ENCODE measurements at regions of chr1 and their contacts with region 1.

Region 1: DNA sequence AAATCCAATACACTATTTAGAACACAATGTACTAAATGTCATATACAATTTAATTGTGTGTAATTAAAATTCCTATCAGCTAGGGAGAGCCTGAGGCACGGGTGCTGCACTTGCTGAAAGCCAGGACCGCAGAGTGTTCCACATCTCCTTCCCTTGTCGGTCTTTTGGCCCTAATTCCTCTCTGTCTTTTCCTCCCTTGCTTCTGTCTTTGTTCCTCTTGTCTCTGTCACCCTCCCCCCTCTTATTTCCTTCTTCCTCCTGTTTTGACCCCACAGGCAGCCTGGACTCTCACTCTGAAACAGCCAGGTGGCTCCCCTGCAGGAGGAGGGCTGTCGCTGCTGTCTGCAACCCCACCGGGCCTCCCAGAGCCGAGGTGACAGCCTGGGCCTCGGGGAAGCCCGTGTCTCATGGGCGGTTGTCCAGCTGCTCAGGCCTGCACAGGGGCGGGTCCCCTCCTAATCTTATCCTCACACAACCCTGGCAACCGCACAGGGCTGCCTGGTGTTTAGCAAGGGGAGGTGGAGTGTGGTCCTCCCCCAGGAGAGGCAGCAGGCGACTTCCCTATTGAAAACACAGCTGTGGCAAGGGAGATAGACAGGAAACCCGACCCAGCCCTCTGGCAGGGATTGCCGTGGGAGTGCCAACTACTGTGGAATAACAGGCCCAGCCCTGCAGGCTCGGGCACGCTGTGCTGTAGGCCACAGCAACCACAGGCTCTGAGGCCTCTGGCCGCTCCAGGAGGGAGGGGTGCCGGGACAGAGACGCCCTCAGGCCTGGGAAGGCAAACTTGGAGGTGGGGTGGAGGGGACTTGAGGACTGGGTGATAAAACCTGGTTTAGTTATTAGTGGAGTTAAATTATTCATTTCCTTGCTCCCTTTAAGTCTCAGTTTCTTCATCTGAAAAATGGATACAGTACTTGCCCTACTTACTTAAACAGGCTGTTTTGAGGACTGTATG is 68.8 kb upstream of the WDR26 start:
- DNase-seq: peak; percentile 51
- ATAC-seq: peak; percentile 96
- H3K4me3 ChIP-seq: peak overlapping the region; percentile 24; the same call in 1 of the 2 replicates
- H3K27ac ChIP-seq: peak overlapping the region; percentile 56
- H3K4me1 ChIP-seq: peaks cover 30% of the 10 kb centered on the region
- H3K27me3 ChIP-seq: no peaks in the 10 kb centered on the region
- CTCF ChIP-seq: peak; percentile 22 to 40 (median 35); a peak in 4 of 6 replicates
- EP300 ChIP-seq: no peak; a peak in 2 of 4 replicates
- POLR2A ChIP-seq: peak; percentile 58
- RAD21 ChIP-seq: peak; percentile 61

Region 2: DNA sequence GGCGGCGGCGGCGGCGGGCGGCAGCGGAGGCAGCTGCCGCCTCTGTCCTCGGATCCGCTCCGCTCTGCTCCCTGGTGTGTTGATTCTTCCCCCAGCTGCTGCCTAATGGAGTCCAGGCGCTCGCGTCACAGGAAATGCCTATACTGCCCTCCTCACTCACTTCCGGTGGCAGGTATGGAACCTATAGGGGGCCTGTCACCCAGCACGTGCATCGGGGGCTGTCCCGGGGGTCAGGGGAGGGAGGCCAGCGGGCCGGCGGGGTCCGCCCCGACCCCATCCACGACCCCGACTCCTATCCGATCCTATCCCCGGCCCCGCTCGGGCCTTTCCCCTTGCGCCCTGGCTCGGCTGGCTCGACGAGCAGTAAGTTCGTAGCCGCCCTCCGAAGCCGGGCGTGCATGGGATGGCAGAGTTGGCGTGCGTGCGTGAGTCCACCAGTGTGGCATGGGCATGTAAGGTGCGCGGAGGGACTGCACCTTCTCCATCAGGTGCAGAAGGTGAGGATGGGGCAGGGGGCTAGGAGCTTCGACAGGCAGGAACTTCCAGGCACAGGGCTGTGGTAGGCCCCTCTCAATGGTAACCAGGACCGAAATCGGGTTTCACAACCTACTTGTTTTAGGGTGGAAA is 68.6 kb before region 1 on chr1 and contains the start of gene WDR26:
- CTCF ChIA-PET with region 1: interaction called, 3 read pairs
- POLR2A ChIA-PET with region 1: no interaction called
- RAD21 ChIA-PET with region 1: interaction called, 4 read pairs
- SMC1A ChIA-PET with region 1: interaction called, 7 read pairs
- in situ Hi-C with region 1: no loop called
- intact Hi-C with region 1: loop called (anchors 2 kb)
- DNase-seq: peak; percentile 40
- ATAC-seq: peak; percentile 89
- H3K4me3 ChIP-seq: peak within 1 kb of the TSS; percentile 89
- H3K27ac ChIP-seq: peak within 1 kb of the TSS; percentile 91
- H3K4me1 ChIP-seq: peaks cover 12% of the 10 kb centered on the region
- H3K27me3 ChIP-seq: no peaks in the 10 kb centered on the region
- CTCF ChIP-seq: peak in 1 of 3 experiments; percentile 19; a peak in 1 of 6 replicates
- EP300 ChIP-seq: no peak
- POLR2A ChIP-seq: peak; percentile 87
- RAD21 ChIP-seq: no peak
- polyA plus RNA-seq, gene WDR26: 8.9 to 10.5 TPM

Region 3: DNA sequence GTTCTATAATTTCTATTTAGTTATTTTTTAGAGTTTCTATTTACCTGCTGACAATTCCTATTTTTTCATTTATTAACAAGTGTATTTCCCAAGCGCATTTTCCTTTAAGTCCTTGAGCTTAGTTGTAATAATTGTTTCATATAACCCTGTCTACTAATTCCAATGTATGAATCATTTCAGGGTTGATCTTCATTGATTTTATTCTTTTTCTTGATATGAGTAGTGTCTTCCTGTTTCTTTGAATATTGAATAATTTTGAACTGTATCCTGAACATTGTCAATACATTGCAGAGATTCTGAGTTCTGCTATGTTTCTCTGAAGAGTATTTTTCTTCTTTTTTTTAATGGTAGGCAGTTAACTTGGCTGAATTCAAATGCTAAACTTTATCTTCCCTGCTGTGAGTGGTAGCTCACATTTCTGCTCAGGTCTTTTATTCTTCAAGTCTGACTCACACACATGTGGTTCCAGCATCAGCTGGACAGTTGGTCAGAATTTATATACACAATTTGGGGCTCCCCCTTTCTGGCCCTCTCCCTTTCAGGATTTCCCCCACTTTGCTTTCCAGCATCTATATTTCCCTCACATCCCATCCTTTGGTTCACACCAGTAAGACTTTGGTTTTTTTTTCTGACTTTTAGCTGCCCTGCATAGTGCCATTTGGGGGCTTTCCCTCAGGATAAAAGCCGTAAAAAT is 14.5 kb before region 1 on chr1:
- CTCF ChIA-PET with region 1: no interaction called
- POLR2A ChIA-PET with region 1: interaction called, 3 read pairs
- RAD21 ChIA-PET with region 1: interaction called, 3 read pairs
- SMC1A ChIA-PET with region 1: interaction called, 12 read pairs
- in situ Hi-C with region 1: no loop called
- intact Hi-C with region 1: no loop called
- DNase-seq: no peak
- ATAC-seq: peak; percentile 74
- H3K4me3 ChIP-seq: no peak overlapping the region
- H3K27ac ChIP-seq: no peak overlapping the region
- H3K4me1 ChIP-seq: no peaks in the 10 kb centered on the region
- H3K27me3 ChIP-seq: no peaks in the 10 kb centered on the region
- CTCF ChIP-seq: no peak
- EP300 ChIP-seq: no peak
- POLR2A ChIP-seq: no peak
- RAD21 ChIP-seq: no peak

Measured in GM12878 (cell line).